Left ventricle myocardium inferior (tissue), 1 donor: ENCODE measurements at regions of chr3 and their contacts with region 1.

Region 1: GRCh38 chr3:167684388-167684993 is 30.7 kb upstream of the WDR49 start:
- DNase-seq: no peak
- H3K4me3 ChIP-seq: no peak overlapping the region
- H3K27ac ChIP-seq: no peak overlapping the region
- H3K4me1 ChIP-seq: no peaks in the 10 kb centered on the region
- H3K27me3 ChIP-seq: no peaks in the 10 kb centered on the region
- CTCF ChIP-seq: peak; percentile 84

Region 2: DNA sequence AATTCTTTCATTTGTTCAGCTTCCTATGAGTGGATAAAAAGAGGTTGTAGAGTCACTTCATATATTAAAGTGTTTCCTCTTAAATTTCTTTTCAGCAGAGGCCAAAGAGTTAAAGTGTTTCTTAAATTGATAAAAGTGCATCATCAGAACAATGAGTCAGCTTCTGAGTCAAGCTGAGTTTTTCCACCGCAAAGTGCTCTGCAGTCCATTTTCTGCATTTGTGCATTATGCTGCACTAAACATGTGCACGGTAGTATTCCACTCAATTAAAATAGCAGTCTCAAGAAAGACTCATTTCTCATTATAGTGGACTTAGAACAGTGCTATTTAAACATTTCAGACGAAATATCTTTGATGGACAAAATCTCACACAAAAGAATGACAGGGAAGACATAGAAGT is 456.4 kb before region 1 on chr3:
- intact Hi-C with region 1: no loop called
- DNase-seq: no peak
- H3K4me3 ChIP-seq: no peak overlapping the region
- H3K27ac ChIP-seq: no peak overlapping the region
- H3K4me1 ChIP-seq: peaks cover 9% of the 10 kb centered on the region
- H3K27me3 ChIP-seq: no peaks in the 10 kb centered on the region
- CTCF ChIP-seq: no peak

Region 3: DNA sequence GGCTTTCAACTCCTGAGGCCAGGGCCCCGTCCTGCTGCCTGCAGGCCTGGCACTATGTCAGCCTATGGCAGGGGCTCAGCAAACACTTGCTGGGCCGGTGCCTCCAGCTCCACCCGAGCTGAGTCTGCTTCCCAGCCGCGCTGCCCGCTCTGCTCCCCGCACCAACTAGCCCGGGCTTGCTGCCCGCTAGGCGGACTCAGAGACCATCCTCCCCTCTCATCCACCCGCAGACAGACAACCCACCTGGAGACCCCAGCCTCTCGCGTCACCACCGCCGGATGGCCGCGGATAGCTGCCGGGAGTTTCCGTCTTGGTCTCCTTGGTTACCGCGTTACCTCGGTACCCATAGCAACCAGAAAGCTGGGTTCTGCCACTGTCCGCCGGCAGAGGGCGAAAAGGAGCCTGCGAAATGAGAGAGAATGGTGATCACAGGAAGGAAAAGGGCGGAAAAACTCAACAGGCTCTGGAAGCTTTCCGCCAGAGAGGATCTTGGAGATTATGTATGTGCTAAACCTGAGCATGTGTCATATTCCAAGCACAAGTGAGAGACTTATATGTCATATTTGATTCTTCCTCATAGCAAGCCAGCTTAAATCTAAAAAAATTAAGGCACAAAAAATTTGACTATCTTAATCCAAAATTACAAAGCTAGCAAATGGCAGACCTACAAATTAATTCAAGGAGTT is 304.3 kb before region 1 on chr3 and contains the start of gene ZBBX:
- intact Hi-C with region 1: loop called (anchors 10 kb)
- DNase-seq: peak; percentile 76
- H3K4me3 ChIP-seq: peak within 1 kb of the TSS; percentile 59
- H3K27ac ChIP-seq: no peak within 1 kb of the TSS
- H3K4me1 ChIP-seq: peaks cover 7% of the 10 kb centered on the region
- H3K27me3 ChIP-seq: peaks cover 5% of the 10 kb centered on the region
- CTCF ChIP-seq: peak; percentile 87
- total RNA-seq, gene ZBBX: not detected